ENCODE measurements at regions of chr12 and their contacts with region 1.

Region 1: GRCh38 chr12:3336606-3337311 is 154.2 kb upstream of the PRMT8 start:
- DNase-seq: no peak
- H3K4me3 ChIP-seq: no peak overlapping the region
- H3K27ac ChIP-seq: no peak overlapping the region
- H3K4me1 ChIP-seq: peaks cover 4 to 19% (median 8%) of the 10 kb centered on the region in 4 experiments
- H3K27me3 ChIP-seq: peaks cover 0 to 1% (median 0%) of the 10 kb centered on the region in 4 experiments; a peak in 1 of 7 replicates
- CTCF ChIP-seq: no peak
- EP300 ChIP-seq: no peak
- POLR2A ChIP-seq: no peak
- RAD21 ChIP-seq: no peak

Region 2: GRCh38 chr12:3281588-3282383 is 55.0 kb before region 1 on chr12:
- CTCF ChIA-PET with region 1: no interaction called
- POLR2A ChIA-PET with region 1: no interaction called
- DNase-seq: no peak
- H3K4me3 ChIP-seq: no peak overlapping the region
- H3K27ac ChIP-seq: no peak overlapping the region
- H3K4me1 ChIP-seq: peaks cover 0 to 15% (median 11%) of the 10 kb centered on the region in 4 experiments; a peak in 5 of 7 replicates
- H3K27me3 ChIP-seq: no peaks in the 10 kb centered on the region
- CTCF ChIP-seq: no peak
- EP300 ChIP-seq: no peak
- POLR2A ChIP-seq: no peak
- RAD21 ChIP-seq: no peak

Region 3: DNA sequence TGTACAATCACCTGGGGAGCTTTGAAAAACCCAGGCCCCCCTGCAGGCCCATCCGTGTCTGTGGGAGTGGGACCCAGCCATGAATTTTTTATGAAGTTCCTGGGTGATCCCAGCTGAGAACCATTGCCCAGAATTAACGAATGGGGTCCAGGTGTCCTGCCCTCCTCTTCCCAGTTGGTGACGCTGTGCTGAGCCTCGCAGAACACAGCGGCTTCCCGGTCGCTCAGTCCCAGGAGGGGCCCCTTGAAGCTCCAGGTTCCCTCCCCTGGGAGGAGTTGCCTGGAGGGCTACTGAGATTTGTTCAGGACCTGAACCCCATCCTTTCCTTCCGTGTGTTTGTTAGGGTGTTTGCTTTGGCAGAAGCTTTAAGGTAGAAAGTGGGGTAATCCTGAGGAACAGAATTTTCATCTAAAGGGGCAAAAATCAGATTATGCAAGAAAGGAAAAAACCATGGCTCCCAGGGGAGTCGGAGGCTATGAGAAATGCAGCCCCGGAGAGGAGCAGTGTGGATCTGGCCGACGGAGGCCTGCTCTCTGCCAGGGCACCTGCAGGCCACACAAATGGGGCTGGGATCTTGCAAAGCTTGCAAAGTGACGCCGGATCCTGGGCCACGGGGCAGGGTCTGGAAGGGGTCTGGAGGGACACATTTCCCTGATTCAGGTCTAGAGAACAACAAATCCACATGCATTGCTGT is 10.5 kb before region 1 on chr12:
- CTCF ChIA-PET with region 1: interaction called, 33 read pairs
- POLR2A ChIA-PET with region 1: no interaction called
- DNase-seq: no peak
- H3K4me3 ChIP-seq: no peak overlapping the region
- H3K27ac ChIP-seq: no peak overlapping the region
- H3K4me1 ChIP-seq: no peaks in the 10 kb centered on the region; a peak in 1 of 7 replicates
- H3K27me3 ChIP-seq: no peaks in the 10 kb centered on the region
- CTCF ChIP-seq: peak; percentile 69 to 82 (median 70)
- EP300 ChIP-seq: no peak
- POLR2A ChIP-seq: no peak
- RAD21 ChIP-seq: peak; percentile 57 to 68